Spleen (tissue), 13 donors: ENCODE measurements at regions of chr5 and their contacts with region 1.

Region 1: GRCh38 chr5:68287976-68288706 is 72.6 kb downstream of the PIK3R1 start:
- DNase-seq: peak; percentile 91
- H3K4me3 ChIP-seq: peak overlapping the region; percentile 16 to 73 (median 52)
- H3K27ac ChIP-seq: peak overlapping the region; percentile 81 to 92 (median 89)
- H3K4me1 ChIP-seq: peaks cover 51 to 100% (median 90%) of the 10 kb centered on the region in 6 donors
- H3K27me3 ChIP-seq: no peaks in the 10 kb centered on the region
- CTCF ChIP-seq: peak in 1 of 11 experiments; percentile 9
- POLR2A ChIP-seq: no peak

Region 2: GRCh38 chr5:67983251-67984110 is 304.7 kb before region 1 on chr5:
- intact Hi-C with region 1: no loop called
- DNase-seq: no peak
- H3K4me3 ChIP-seq: no peak overlapping the region
- H3K27ac ChIP-seq: no peak overlapping the region
- H3K4me1 ChIP-seq: no peaks in the 10 kb centered on the region
- H3K27me3 ChIP-seq: no peaks in the 10 kb centered on the region
- CTCF ChIP-seq: no peak
- POLR2A ChIP-seq: no peak

Region 3: GRCh38 chr5:68460147-68460798 is 172.1 kb after region 1 on chr5:
- intact Hi-C with region 1: loop called (anchors 2 kb)
- DNase-seq: no peak
- H3K4me3 ChIP-seq: no peak overlapping the region
- H3K27ac ChIP-seq: peak overlapping the region in 4 of 8 donors; percentile 9 to 43 (median 29)
- H3K4me1 ChIP-seq: peaks cover 0 to 28% (median 10%) of the 10 kb centered on the region in 6 donors
- H3K27me3 ChIP-seq: no peaks in the 10 kb centered on the region
- CTCF ChIP-seq: peak; percentile 46 to 79 (median 74)
- POLR2A ChIP-seq: no peak

Region 4: DNA sequence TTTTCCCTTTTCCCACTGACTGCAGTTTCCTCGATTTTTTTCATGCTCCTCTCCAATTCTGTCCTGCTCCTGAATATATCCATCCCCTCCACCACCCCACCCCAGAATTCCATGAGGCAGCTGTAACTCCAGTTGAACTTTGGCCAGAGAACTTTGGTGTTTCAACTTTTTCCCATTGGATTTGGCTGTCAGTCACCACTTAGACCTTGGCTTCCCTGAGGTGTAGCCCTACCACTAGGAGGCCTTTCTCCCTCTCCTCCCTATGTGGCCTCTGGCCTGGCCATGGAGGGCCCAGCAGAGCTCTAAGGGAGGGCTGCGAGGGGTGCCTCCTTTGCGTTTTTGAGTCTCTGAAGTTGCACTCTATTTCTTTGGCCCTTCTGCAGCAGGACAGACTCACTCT is 188.7 kb after region 1 on chr5:
- intact Hi-C with region 1: no loop called
- DNase-seq: no peak
- H3K4me3 ChIP-seq: no peak overlapping the region
- H3K27ac ChIP-seq: no peak overlapping the region
- H3K4me1 ChIP-seq: peaks cover 0 to 5% (median 0%) of the 10 kb centered on the region in 6 donors
- H3K27me3 ChIP-seq: no peaks in the 10 kb centered on the region
- CTCF ChIP-seq: no peak
- POLR2A ChIP-seq: no peak

Region 5: DNA sequence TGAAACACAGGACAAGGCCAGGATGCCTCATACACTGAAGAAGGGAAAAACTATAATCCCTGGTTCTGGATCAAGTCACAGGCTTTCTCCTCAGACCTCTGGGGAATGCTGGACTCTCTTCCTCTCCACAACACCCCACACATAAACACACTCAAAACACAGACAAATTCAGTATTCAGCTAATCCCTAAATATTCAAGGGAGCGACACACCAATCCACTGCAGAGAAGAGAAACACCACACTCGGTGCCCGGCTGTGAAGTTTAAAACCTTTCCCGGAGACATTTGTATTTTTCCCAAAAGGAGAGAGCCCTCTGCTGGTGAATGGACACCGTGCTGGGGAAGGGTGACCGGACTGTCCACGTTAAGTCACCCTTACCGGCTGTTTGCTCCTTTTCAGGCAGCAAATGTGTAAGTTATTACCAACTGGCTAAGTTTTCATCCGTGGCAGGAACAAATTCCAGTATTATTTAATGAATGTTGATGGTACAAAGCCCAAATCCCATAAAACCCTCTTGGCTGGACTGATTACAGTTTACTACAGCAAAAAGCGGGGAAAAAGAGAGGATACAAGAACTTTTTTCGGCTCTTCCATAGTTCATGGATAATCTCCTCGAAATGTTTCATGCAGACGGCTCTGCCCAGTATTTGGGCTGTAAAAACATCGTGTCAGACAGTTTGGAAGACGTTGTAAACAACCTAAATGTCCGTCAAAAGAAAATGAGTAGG is 674.8 kb after region 1 on chr5:
- intact Hi-C with region 1: loop called (anchors 5 kb)
- DNase-seq: no peak
- H3K4me3 ChIP-seq: no peak overlapping the region
- H3K27ac ChIP-seq: no peak overlapping the region
- H3K4me1 ChIP-seq: peaks cover 0 to 5% (median 0%) of the 10 kb centered on the region in 6 donors
- H3K27me3 ChIP-seq: no peaks in the 10 kb centered on the region
- CTCF ChIP-seq: peak in 10 of 11 experiments; percentile 18 to 75 (median 61)
- POLR2A ChIP-seq: no peak